ENCODE measurements at regions of chr12 and their contacts with region 1.

Region 1: GRCh38 chr12:121688966-121689365 is 19.5 kb upstream of the MORN3 start:
- DNase-seq: no peak
- ATAC-seq: no peak
- H3K4me3 ChIP-seq: no peak overlapping the region
- H3K4me3 Mint-ChIP-seq: no peak overlapping the region
- H3K27ac ChIP-seq: no peak overlapping the region
- H3K27ac Mint-ChIP-seq: peak overlapping the region in 1 of 2 donors; percentile 28
- H3K4me1 ChIP-seq: peaks cover 4 to 16% of the 10 kb centered on the region in 2 experiments
- H3K4me1 Mint-ChIP-seq: peaks cover 7 to 12% (median 9%) of the 10 kb centered on the region in 3 donors
- H3K27me3 ChIP-seq: peaks cover 0 to 2% of the 10 kb centered on the region in 2 experiments
- H3K27me3 Mint-ChIP-seq: no peaks in the 10 kb centered on the region

Region 2: DNA sequence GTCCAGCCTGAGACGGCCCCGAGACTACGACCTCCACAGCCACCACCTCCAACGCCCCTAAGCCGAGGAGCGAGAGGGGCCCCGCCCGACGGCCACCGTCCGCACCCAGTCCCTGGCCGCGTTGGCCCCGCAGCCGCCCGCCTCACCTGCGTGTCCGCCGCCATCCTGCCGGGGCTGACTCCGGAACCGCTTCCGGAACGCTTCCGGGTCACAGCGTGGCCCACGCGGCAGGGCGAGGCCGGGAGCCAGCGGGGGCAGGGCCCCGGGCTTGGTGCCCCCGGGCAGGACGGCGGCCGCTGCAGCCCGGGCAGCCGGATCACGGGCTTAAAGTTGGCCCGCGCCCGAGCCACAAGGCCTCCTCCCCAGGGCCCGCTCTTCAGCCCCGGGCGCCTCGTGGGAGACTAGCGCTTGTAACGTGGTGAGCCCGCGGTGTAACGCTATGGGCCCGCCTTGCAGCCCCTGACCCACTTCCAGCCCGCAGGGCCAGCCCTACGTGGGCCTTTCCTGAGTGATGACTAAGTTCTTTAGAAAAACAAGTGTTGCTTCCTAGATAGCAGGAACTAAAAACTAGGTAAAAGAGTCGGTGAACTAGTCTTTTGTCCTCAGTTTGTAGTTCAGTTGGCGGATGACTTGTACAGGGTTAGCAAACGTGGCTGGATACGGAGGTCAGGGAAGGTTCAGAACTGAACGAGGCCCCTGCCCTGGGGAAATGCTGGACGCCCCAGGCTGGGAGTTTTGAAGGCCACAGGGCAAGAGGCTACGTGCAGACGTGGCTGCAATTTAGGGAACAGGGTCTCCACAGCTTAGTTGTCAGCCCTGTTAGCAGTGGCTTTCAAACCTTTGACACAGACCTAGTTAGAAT is 1494.2 kb before region 1 on chr12 and contains the start of gene GCN1:
- CTCF ChIA-PET with region 1: no interaction called
- POLR2A ChIA-PET with region 1: no interaction called
- DNase-seq: peak; percentile 67 to 92 (median 84)
- ATAC-seq: peak; percentile 89 to 93 (median 92)
- H3K4me3 ChIP-seq: peak within 1 kb of the TSS; percentile 77 to 83
- H3K4me3 Mint-ChIP-seq: peak within 1 kb of the TSS; percentile 83 to 89 (median 86)
- H3K27ac ChIP-seq: peak within 1 kb of the TSS; percentile 84
- H3K27ac Mint-ChIP-seq: peak within 1 kb of the TSS; percentile 94 to 98
- H3K4me1 ChIP-seq: peaks cover 19 to 44% of the 10 kb centered on the region in 2 experiments
- H3K4me1 Mint-ChIP-seq: peaks cover 39 to 58% (median 51%) of the 10 kb centered on the region in 3 donors
- H3K27me3 ChIP-seq: no peaks in the 10 kb centered on the region
- H3K27me3 Mint-ChIP-seq: no peaks in the 10 kb centered on the region
- total RNA-seq, gene GCN1: 139 to 171 (median 161) TPM

Region 3: GRCh38 chr12:121499929-121500793 is 188.8 kb before region 1 on chr12:
- CTCF ChIA-PET with region 1: interaction called, 3 to 4 read pairs
- POLR2A ChIA-PET with region 1: interaction called in 1 of 2 experiments, 11 read pairs
- DNase-seq: peak; percentile 32 to 86 (median 66)
- ATAC-seq: peak; percentile 81 to 88 (median 82)
- H3K4me3 ChIP-seq: no peak overlapping the region
- H3K4me3 Mint-ChIP-seq: no peak overlapping the region
- H3K27ac ChIP-seq: no peak overlapping the region
- H3K27ac Mint-ChIP-seq: peak overlapping the region in 1 of 2 donors; percentile 22
- H3K4me1 ChIP-seq: peaks cover 0 to 36% of the 10 kb centered on the region in 2 experiments
- H3K4me1 Mint-ChIP-seq: peaks cover 9 to 23% (median 23%) of the 10 kb centered on the region in 3 donors
- H3K27me3 ChIP-seq: no peaks in the 10 kb centered on the region
- H3K27me3 Mint-ChIP-seq: no peaks in the 10 kb centered on the region

Region 4: GRCh38 chr12:121657305-121658008 is 31.5 kb before region 1 on chr12:
- CTCF ChIA-PET with region 1: interaction called, 3 to 10 read pairs
- POLR2A ChIA-PET with region 1: no interaction called
- DNase-seq: no peak
- ATAC-seq: no peak
- H3K4me3 ChIP-seq: no peak overlapping the region
- H3K4me3 Mint-ChIP-seq: peak overlapping the region in 1 of 3 donors; percentile 86
- H3K27ac ChIP-seq: no peak overlapping the region
- H3K27ac Mint-ChIP-seq: peak overlapping the region; percentile 98 to 99
- H3K4me1 ChIP-seq: peaks cover 26 to 64% of the 10 kb centered on the region in 2 experiments
- H3K4me1 Mint-ChIP-seq: peaks cover 52 to 76% (median 65%) of the 10 kb centered on the region in 3 donors
- H3K27me3 ChIP-seq: no peaks in the 10 kb centered on the region
- H3K27me3 Mint-ChIP-seq: no peaks in the 10 kb centered on the region

Region 5: GRCh38 chr12:121701667-121702277 is 12.8 kb after region 1 on chr12:
- CTCF ChIA-PET with region 1: no interaction called
- POLR2A ChIA-PET with region 1: no interaction called
- DNase-seq: no peak
- ATAC-seq: no peak
- H3K4me3 ChIP-seq: no peak overlapping the region
- H3K4me3 Mint-ChIP-seq: no peak overlapping the region
- H3K27ac ChIP-seq: no peak overlapping the region
- H3K27ac Mint-ChIP-seq: no peak overlapping the region
- H3K4me1 ChIP-seq: peaks cover 0 to 5% of the 10 kb centered on the region in 2 experiments
- H3K4me1 Mint-ChIP-seq: peaks cover 0 to 5% (median 2%) of the 10 kb centered on the region in 3 donors
- H3K27me3 ChIP-seq: peaks cover 0 to 12% of the 10 kb centered on the region in 2 experiments
- H3K27me3 Mint-ChIP-seq: peaks cover 0 to 4% of the 10 kb centered on the region in 2 donors

Region 6: GRCh38 chr12:121787063-121788025 is 98.4 kb after region 1 on chr12:
- CTCF ChIA-PET with region 1: interaction called, 3 to 6 read pairs
- POLR2A ChIA-PET with region 1: interaction called in 1 of 2 experiments, 13 read pairs
- DNase-seq: peak in 22 of 35 experiments; percentile 34 to 77 (median 56)
- ATAC-seq: peak in 3 of 4 experiments; percentile 2 to 26 (median 24)
- H3K4me3 ChIP-seq: peak overlapping the region; percentile 58 to 60
- H3K4me3 Mint-ChIP-seq: peak overlapping the region; percentile 73 to 94 (median 77)
- H3K27ac ChIP-seq: peak overlapping the region; percentile 97
- H3K27ac Mint-ChIP-seq: peak overlapping the region; percentile 100
- H3K4me1 ChIP-seq: peaks cover 50 to 99% of the 10 kb centered on the region in 2 experiments
- H3K4me1 Mint-ChIP-seq: peaks cover 87 to 94% (median 94%) of the 10 kb centered on the region in 3 donors
- H3K27me3 ChIP-seq: no peaks in the 10 kb centered on the region
- H3K27me3 Mint-ChIP-seq: no peaks in the 10 kb centered on the region